Activated CD4-positive, alpha-beta T cell treated with anti-CD3 and anti-CD28 coated beads for 36 hours (primary cell): ENCODE measurements at regions of chr9 and their contacts with region 1.

Region 1: GRCh38 chr9:20402273-20402875 is 219.9 kb downstream of the MLLT3 start:
- DNase-seq: no peak
- ATAC-seq: peak; percentile 33
- H3K4me3 Mint-ChIP-seq: no peak overlapping the region
- H3K27ac Mint-ChIP-seq: no peak overlapping the region
- H3K4me1 Mint-ChIP-seq: peaks cover 34% of the 10 kb centered on the region
- H3K27me3 Mint-ChIP-seq: no peaks in the 10 kb centered on the region

Region 2: DNA sequence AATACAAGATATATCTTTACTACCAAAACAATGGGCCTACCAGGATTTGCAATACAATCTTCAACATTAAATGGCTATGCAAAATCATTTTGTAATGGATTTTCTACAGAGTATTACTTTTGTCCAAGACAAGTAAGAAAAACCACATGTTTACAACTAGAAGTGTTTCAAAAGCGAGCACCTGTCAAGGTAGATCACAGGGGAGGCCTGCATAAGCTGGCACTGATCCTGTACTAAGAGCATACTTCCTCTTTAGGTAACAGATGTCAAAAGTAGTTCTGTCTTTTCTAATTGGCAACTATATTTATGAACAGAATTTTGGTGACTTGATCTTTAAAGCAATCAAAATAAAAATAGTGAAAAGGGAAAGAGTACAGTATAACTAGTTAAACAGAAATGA is 29.1 kb before region 1 on chr9:
- CTCF ChIA-PET with region 1: no interaction called
- POLR2A ChIA-PET with region 1: no interaction called
- intact Hi-C with region 1: no loop called
- DNase-seq: no peak
- ATAC-seq: no peak
- H3K4me3 Mint-ChIP-seq: no peak overlapping the region
- H3K27ac Mint-ChIP-seq: no peak overlapping the region
- H3K4me1 Mint-ChIP-seq: peaks cover 60% of the 10 kb centered on the region
- H3K27me3 Mint-ChIP-seq: no peaks in the 10 kb centered on the region

Region 3: DNA sequence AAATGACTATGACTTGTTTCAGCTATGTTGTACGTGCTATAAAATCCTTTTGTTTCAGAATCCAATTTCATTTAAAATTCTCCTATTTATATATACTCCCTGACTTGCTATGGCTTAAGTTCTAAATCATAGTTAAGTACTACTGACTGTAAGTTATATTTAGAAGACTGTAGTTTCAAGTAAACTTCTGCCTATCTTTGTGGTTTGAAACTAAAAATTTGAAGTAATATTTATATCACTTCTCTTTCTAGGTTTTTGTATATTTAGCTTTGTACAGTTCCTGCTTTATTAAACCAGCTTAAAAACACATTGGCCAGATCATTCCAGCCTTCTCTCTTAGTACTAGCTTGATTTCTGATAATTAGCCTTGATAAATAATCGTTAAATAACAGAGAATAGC is 23.6 kb after region 1 on chr9:
- CTCF ChIA-PET with region 1: no interaction called
- POLR2A ChIA-PET with region 1: no interaction called
- intact Hi-C with region 1: loop called in 1 of 2 experiments (anchors 2 kb)
- DNase-seq: no peak
- ATAC-seq: no peak
- H3K4me3 Mint-ChIP-seq: no peak overlapping the region
- H3K27ac Mint-ChIP-seq: no peak overlapping the region
- H3K4me1 Mint-ChIP-seq: peaks cover 8% of the 10 kb centered on the region
- H3K27me3 Mint-ChIP-seq: no peaks in the 10 kb centered on the region